CD8-positive, alpha-beta memory T cell (primary cell): ENCODE measurements at regions of chr2 and their contacts with region 1.

Region 1: DNA sequence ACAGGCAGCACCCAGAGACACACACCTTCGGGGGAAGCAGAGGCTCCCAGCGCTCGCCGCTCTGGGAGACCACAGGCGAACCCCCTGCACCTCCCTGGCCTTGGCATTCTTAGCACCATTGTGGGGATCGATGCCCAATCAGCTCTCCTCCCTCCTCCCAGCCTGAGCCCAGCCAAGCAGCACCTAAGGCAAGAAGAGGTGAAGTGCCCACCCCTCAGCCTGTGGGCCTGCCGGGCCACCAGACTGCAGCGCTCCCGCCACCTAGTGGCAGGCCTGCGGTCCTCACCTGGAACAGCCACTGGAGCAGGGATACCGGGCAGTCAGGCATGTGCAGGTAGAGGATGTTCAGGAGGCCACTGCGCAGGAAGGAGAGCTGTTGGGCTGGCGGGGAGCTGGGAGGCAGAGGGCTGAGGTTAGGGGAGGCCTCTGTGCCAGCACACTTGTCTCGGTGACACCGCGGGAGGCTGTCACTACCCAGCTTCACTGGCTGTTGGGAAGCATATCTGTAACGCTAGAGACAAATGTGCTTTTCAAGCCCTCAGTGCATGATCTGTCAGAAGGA is 35.2 kb downstream of the FAM178B start:
- DNase-seq: peak; percentile 59 to 85 (median 74)
- H3K4me3 ChIP-seq: no peak overlapping the region
- H3K4me3 Mint-ChIP-seq: no peak overlapping the region
- H3K27ac ChIP-seq: no peak overlapping the region
- H3K27ac Mint-ChIP-seq: peak overlapping the region in 5 of 8 donors; percentile 5 to 75 (median 47)
- H3K4me1 ChIP-seq: peaks cover 21% of the 10 kb centered on the region
- H3K4me1 Mint-ChIP-seq: peaks cover 17 to 23% (median 21%) of the 10 kb centered on the region in 3 donors
- H3K27me3 ChIP-seq: no peaks in the 10 kb centered on the region
- H3K27me3 Mint-ChIP-seq: no peaks in the 10 kb centered on the region

Region 2: GRCh38 chr2:96868555-96869280 is 82.5 kb before region 1 on chr2:
- CTCF ChIA-PET with region 1: interaction called, 358 read pairs
- POLR2A ChIA-PET with region 1: interaction called, 6 read pairs
- DNase-seq: peak; percentile 45 to 79 (median 61)
- H3K4me3 ChIP-seq: peak overlapping the region; percentile 63
- H3K4me3 Mint-ChIP-seq: peak overlapping the region; percentile 80 to 95 (median 88)
- H3K27ac ChIP-seq: peak overlapping the region; percentile 77
- H3K27ac Mint-ChIP-seq: peak overlapping the region in 7 of 8 donors; percentile 63 to 98 (median 86)
- H3K4me1 ChIP-seq: peaks cover 27% of the 10 kb centered on the region
- H3K4me1 Mint-ChIP-seq: peaks cover 29 to 57% (median 46%) of the 10 kb centered on the region in 3 donors
- H3K27me3 ChIP-seq: no peaks in the 10 kb centered on the region
- H3K27me3 Mint-ChIP-seq: no peaks in the 10 kb centered on the region

Region 3: DNA sequence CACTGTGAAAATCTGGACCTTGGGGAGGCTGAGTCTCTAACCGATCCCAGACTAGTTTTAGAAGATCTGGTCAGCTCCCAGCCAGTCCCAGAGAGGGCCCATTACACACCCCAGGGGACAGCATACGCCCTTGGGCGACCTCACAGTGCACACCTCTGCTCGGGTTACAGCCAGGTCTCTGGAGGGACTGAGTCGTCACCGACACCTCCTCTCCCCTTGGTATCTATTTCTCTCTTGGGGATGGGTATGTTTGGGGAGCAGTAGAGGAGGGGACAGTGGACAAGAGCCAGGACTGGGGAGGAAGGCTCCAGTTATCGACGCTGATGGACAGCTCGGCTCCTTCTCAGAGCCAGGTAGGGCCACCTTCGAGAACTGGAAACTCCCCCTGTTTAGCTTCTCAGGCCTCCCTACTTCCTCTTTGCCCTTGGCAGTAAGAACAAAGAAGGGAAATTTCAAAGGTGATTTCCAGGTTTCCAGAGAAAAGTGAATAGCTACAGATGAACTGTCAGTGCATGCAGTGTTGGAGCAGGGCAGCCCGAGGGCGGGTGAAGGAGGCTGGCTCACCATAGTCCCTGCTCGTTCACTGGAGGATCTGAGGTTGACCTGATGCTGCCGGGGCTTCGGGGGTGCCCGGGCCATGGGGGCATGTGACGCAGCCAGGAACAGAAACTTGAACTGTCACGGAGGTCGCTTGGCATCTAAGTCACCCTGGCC is 76.9 kb before region 1 on chr2:
- CTCF ChIA-PET with region 1: interaction called, 358 read pairs
- POLR2A ChIA-PET with region 1: interaction called, 6 read pairs
- DNase-seq: no peak
- H3K4me3 ChIP-seq: no peak overlapping the region
- H3K4me3 Mint-ChIP-seq: peak overlapping the region in 1 of 7 donors; percentile 43
- H3K27ac ChIP-seq: no peak overlapping the region
- H3K27ac Mint-ChIP-seq: peak overlapping the region; percentile 19 to 95 (median 58)
- H3K4me1 ChIP-seq: peaks cover 29% of the 10 kb centered on the region
- H3K4me1 Mint-ChIP-seq: peaks cover 26 to 58% (median 31%) of the 10 kb centered on the region in 3 donors
- H3K27me3 ChIP-seq: no peaks in the 10 kb centered on the region
- H3K27me3 Mint-ChIP-seq: no peaks in the 10 kb centered on the region

Region 4: GRCh38 chr2:96923810-96924774 is 27.1 kb before region 1 on chr2:
- CTCF ChIA-PET with region 1: interaction called, 10 read pairs
- POLR2A ChIA-PET with region 1: no interaction called
- DNase-seq: peak; percentile 11 to 70 (median 50)
- H3K4me3 ChIP-seq: peak overlapping the region; percentile 71
- H3K4me3 Mint-ChIP-seq: peak overlapping the region; percentile 81 to 93 (median 88)
- H3K27ac ChIP-seq: peak overlapping the region; percentile 60
- H3K27ac Mint-ChIP-seq: peak overlapping the region; percentile 67 to 98 (median 95)
- H3K4me1 ChIP-seq: peaks cover 34% of the 10 kb centered on the region
- H3K4me1 Mint-ChIP-seq: peaks cover 28 to 46% (median 37%) of the 10 kb centered on the region in 3 donors
- H3K27me3 ChIP-seq: no peaks in the 10 kb centered on the region
- H3K27me3 Mint-ChIP-seq: no peaks in the 10 kb centered on the region

Region 5: DNA sequence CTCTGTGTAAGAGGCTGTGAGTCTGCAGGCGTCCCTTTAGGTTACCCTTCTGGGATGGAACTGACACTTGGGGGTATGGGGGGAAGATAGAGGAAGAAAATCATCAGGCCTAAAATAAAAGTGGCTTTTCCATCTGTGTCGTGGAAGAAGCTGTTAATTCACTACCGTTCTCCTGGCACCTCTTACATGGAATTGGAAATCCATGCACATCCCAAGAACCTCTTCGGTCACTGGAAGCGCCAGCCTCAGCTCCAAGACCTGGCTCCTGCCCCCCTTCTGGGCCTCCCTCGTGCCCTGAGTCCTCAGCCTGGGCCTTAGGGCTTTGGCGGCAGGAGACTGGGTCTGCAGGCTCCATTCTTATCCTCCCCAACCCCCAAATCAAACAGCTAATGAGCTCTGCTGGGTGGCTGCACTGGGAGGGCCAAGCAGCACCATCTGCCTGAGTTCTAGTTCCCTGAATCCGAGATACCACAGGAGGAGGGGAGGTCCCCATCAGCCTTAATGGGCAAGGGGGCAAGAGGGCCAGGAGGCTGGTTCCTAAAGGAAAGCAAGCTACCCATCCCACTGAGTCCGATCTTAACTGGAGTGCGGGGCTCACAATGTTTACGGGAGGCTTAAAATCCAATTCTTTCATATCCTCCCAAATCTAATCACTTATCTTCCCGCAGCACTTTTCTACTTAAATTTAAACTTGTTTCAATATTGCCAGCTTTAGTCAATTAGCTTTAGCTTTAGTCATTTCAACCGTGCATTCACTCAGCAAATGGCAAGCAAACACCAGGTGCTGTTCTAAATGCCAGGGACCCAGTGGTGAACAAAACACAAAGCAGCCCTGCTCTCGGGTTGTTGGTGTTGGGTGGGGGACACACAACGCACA is 17.6 kb before region 1 on chr2:
- CTCF ChIA-PET with region 1: interaction called, 12 read pairs
- POLR2A ChIA-PET with region 1: no interaction called
- DNase-seq: peak in 1 of 5 donors; percentile 25
- H3K4me3 ChIP-seq: no peak overlapping the region
- H3K4me3 Mint-ChIP-seq: no peak overlapping the region
- H3K27ac ChIP-seq: no peak overlapping the region
- H3K27ac Mint-ChIP-seq: no peak overlapping the region
- H3K4me1 ChIP-seq: no peaks in the 10 kb centered on the region
- H3K4me1 Mint-ChIP-seq: peaks cover 8 to 9% (median 9%) of the 10 kb centered on the region in 3 donors
- H3K27me3 ChIP-seq: no peaks in the 10 kb centered on the region
- H3K27me3 Mint-ChIP-seq: peaks cover 0 to 2% of the 10 kb centered on the region in 2 donors

Region 6: DNA sequence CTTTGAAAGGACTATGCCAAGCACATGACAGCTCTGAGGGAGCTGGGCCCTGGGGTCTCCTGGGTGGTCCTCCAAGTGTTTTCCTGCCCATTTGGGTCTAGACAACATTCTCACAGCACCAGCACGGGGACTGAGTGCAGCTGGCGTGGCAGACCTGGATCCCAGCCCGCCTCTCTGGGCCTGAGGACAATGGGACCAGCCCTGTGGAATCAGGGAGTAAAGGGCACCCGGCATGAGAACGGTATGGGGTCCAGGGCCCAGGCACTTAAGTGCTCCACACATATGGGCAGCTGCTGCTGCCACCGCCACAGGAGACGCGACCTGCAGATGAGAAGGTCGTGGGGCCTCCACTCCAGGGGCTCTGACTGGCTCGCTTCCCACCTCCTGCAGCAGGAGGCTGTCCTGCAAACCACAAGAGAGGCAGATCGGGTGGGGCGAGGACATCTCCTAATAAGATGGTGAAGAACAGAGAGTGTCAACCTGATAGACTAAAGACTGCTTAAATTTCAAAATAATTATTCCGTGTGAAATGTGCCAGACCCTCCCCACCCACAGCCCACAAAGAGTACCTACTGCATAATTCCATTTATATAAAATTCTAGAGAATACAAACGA is 11.1 kb before region 1 on chr2:
- CTCF ChIA-PET with region 1: interaction called, 18 read pairs
- POLR2A ChIA-PET with region 1: no interaction called
- DNase-seq: peak in 1 of 5 donors; percentile 35
- H3K4me3 ChIP-seq: no peak overlapping the region
- H3K4me3 Mint-ChIP-seq: peak overlapping the region in 5 of 7 donors; percentile 1 to 70 (median 66)
- H3K27ac ChIP-seq: no peak overlapping the region
- H3K27ac Mint-ChIP-seq: peak overlapping the region in 1 of 8 donors; percentile 62
- H3K4me1 ChIP-seq: peaks cover 29% of the 10 kb centered on the region
- H3K4me1 Mint-ChIP-seq: peaks cover 24 to 36% (median 33%) of the 10 kb centered on the region in 3 donors
- H3K27me3 ChIP-seq: no peaks in the 10 kb centered on the region
- H3K27me3 Mint-ChIP-seq: peaks cover 0 to 2% of the 10 kb centered on the region in 2 donors